Right cardiac atrium (tissue), 5 donors: ENCODE measurements at regions of chr3 and their contacts with region 1.

Region 1: GRCh38 chr3:191328962-191329653 is at the start of gene CCDC50:
- DNase-seq: peak; percentile 88 to 95 (median 95)
- ATAC-seq: peak; percentile 86 to 87
- H3K4me3 ChIP-seq: peak within 1 kb of the TSS; percentile 61
- H3K27ac ChIP-seq: peak within 1 kb of the TSS; percentile 72
- H3K4me1 ChIP-seq: peaks cover 7% of the 10 kb centered on the region
- H3K27me3 ChIP-seq: no peaks in the 10 kb centered on the region
- total RNA-seq, gene CCDC50: 47.6 to 67.5 (median 51.3) TPM

Region 2: GRCh38 chr3:191170097-191170496 is 159.0 kb before region 1 on chr3:
- intact Hi-C with region 1: no loop called
- DNase-seq: no peak
- ATAC-seq: peak in 1 of 2 donors; percentile 29
- H3K4me3 ChIP-seq: no peak overlapping the region
- H3K27ac ChIP-seq: no peak overlapping the region
- H3K4me1 ChIP-seq: no peaks in the 10 kb centered on the region
- H3K27me3 ChIP-seq: no peaks in the 10 kb centered on the region

Region 3: DNA sequence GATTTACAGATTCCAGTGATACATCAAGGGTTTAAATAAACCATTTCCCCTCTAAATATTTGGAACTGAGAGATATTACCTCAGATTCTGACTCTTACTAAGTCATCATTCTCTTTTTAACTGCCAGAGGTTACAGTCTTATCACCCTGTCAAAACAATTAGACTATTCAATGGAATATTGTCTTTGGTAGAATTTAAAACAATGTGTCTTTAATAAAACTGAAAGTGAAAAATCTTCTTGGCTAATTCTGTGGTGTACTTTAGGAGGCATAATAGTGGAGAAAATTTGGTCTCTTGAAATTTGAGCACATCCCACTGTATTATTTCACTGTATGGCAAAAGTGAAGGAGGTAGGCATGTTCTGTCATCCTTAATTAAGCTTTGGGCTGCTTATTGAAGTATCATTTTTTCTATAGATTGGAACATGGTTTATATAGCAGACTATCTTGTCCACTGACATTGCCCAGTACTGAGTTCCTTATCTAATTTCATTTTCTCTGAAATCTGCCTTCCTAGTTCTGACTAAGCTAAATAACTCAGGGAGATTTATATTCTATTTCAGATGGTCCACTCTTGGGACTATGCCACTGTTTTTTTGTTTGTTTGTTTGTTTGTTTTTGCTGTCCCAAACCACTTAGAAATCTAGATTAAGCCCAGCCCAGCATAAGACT is 49.2 kb after region 1 on chr3:
- intact Hi-C with region 1: loop called in 2 of 4 experiments (anchors 2 to 10 kb)
- DNase-seq: no peak
- ATAC-seq: peak; percentile 32 to 53
- H3K4me3 ChIP-seq: no peak overlapping the region
- H3K27ac ChIP-seq: peak overlapping the region; percentile 58
- H3K4me1 ChIP-seq: peaks cover 7% of the 10 kb centered on the region
- H3K27me3 ChIP-seq: no peaks in the 10 kb centered on the region

Region 4: GRCh38 chr3:191492601-191493000 is 163.5 kb after region 1 on chr3:
- intact Hi-C with region 1: no loop called
- DNase-seq: no peak
- ATAC-seq: no peak
- H3K4me3 ChIP-seq: no peak overlapping the region
- H3K27ac ChIP-seq: no peak overlapping the region
- H3K4me1 ChIP-seq: no peaks in the 10 kb centered on the region
- H3K27me3 ChIP-seq: no peaks in the 10 kb centered on the region